ENCODE measurements at regions of chr10 and their contacts with region 1.

Region 1: GRCh38 chr10:92573798-92574547 is at the start of gene IDE:
- DNase-seq: peak; percentile 89
- ATAC-seq: peak; percentile 80
- H3K4me3 Mint-ChIP-seq: peak within 1 kb of the TSS; percentile 68
- H3K27ac Mint-ChIP-seq: peak within 1 kb of the TSS; percentile 80
- H3K4me1 Mint-ChIP-seq: peaks cover 31% of the 10 kb centered on the region
- H3K27me3 Mint-ChIP-seq: peaks cover 4% of the 10 kb centered on the region
- total RNA-seq, gene IDE: 14.1 to 25.9 TPM

Region 2: DNA sequence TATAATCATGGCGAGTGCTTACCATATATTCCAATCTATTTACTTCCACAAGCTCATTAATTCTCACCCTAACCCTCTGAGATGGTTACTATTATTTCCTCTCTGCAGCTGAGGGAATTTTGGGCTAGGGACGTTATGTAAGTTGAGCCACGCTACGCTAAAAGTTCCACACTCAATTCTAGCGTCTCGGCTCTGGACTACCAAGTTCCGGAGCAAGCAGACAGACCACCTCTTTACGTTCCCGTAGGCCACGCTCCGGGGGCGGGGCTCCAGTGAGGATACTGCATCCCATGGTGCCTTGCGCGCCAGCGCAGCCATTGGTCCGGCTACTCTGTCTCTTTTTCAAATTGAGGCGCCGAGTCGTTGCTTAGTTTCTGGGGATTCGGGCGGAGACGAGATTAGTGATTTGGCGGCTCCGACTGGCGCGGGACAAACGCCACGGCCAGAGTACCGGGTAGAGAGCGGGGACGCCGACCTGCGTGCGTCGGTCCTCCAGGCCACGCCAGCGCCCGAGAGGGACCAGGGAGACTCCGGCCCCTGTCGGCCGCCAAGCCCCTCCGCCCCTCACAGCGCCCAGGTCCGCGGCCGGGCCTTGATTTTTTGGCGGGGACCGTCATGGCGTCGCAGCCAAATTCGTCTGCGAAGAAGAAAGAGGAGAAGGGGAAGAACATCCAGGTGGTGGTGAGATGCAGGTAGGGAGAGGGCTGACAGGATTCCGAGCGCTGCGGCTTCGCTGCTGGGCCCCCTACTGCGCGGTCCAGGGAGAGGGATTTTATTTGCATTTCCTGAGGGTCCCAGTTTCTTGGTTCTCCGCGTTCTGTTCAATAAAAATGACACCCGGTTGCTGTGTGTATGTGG is 19.0 kb after region 1 on chr10 and contains the start of gene KIF11:
- CTCF ChIA-PET with region 1: interaction called, 26 read pairs
- DNase-seq: peak; percentile 99
- ATAC-seq: peak; percentile 88
- H3K4me3 Mint-ChIP-seq: peak within 1 kb of the TSS; percentile 91
- H3K27ac Mint-ChIP-seq: peak within 1 kb of the TSS; percentile 99
- H3K4me1 Mint-ChIP-seq: peaks cover 47% of the 10 kb centered on the region
- H3K27me3 Mint-ChIP-seq: no peaks in the 10 kb centered on the region
- total RNA-seq, gene KIF11: 76.9 to 79.6 TPM